ENCODE measurements at regions of chr4 and their contacts with region 1.

Region 1: DNA sequence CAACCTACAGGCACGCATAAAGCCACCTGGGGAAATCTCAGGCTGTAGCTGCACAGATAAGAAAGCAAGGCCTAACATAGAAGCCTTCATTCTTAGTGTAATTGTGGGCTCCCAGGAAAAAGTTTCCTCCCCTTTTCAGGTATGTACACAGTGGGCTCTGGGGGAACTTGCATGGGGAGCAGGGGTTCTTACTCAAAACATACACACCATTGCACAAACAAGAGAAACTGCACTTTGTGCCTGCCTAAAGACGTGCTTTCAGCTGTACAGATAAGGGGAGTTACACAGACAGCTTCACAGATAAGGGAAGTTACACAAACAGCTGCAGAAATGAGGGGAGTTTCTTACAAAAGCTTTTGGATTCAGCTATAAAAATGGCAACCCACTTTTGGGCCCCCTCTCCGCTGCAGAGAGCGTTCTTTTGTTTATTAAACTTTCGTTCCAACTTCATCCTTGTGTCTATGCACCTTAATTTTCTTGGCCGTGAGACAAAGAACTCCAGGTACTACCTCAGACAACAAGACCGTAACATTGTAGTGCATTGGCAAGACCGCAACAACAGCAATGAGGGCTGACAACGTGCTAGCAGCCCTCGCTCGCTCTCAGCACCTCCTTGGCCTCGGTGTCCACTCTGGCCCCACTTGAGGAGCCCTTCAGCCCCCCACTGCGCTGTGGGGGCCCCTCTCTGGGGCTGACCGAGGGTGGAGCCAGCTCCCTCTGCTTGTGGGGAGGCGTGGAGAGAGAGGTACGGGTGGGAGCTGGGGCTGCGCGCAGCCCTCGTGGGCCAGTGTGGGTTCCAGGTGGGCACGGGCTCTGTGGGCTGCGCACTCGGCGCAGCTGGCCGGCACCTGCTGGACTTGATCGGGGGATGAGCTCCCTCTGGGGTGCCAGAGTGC is 317.5 kb downstream of the RAPGEF2 start:
- DNase-seq: no peak
- CTCF ChIP-seq: no peak

Region 2: GRCh38 chr4:159410076-159410777 is 10.2 kb before region 1 on chr4:
- CTCF ChIA-PET with region 1: interaction called, 15 read pairs
- POLR2A ChIA-PET with region 1: no interaction called
- DNase-seq: no peak
- CTCF ChIP-seq: no peak

Region 3: DNA sequence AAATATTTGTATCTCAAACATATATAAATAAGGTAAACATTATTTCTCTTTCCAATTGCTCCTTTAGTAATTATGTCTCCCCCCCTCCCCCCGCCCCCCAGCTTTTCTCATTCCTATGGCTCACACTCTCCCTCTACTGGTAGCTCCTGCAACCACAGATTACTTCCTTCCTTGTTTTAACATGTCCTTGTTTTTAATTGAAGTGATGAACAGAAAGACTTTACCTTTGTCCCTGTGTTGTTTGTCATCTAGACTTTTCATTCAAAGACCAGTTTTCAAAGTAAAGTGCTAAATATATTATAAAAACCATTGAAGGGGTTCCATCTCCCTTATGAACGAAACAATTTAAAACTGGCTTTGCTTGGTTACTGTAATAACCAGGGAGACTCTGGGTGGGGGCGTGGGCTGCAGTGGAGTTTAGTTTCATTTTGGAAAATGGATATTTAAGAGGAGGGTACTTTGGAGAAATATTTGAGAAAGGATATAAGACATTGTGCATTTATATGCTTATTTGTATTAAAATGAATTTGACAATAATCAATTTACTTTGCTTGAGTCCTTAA is 35.3 kb after region 1 on chr4:
- CTCF ChIA-PET with region 1: no interaction called
- POLR2A ChIA-PET with region 1: no interaction called
- DNase-seq: peak; percentile 38
- CTCF ChIP-seq: peak; percentile 58

Measured in GM10248 (cell line).